Right ventricle myocardium inferior (tissue), 1 donor: ENCODE measurements at regions of chr2 and their contacts with region 1.

Region 1: DNA sequence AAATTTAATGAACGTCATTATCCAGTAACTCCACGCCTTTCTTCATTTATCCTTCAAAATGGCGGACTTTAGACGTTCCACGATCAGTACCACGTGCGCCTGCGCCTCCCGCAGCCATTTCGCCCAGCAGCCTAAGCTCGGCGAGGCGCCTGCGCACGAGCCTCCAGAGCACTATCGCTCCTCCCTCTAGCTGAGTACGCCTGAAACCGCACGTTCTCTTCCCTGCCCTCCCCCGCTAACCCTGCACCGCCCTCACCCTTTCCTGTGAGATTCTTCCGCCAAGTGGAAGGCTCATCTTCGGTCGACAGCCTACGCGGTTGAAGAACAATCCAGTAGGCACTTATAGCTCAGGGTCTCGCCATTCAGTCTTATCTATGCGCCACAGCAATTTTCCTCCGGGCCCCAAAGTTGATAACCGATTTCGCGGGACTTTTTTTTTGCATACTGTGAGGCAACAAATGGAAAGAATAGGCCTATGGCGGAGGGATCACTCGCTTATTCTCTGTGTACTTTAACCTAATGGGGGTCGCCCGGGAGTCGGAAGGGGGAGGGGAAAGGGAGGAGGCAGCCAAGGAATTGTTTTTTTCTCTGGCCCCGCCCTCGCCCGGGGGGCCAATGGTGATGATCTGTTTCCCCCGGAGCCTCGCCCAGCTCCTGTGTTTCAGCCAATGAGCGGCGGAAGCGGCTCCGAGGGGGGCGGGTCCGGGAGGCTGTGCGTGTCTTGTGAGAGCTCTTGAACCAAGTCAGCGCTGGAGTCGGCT is at the start of gene KDM3A:
- DNase-seq: peak; percentile 100
- ATAC-seq: peak; percentile 95
- total RNA-seq, gene KDM3A: 29.5 TPM

Region 2: GRCh38 chr2:86221066-86221684 is 219.6 kb before region 1 on chr2:
- intact Hi-C with region 1: loop called (anchors 5 kb)
- DNase-seq: no peak
- ATAC-seq: no peak

Region 3: DNA sequence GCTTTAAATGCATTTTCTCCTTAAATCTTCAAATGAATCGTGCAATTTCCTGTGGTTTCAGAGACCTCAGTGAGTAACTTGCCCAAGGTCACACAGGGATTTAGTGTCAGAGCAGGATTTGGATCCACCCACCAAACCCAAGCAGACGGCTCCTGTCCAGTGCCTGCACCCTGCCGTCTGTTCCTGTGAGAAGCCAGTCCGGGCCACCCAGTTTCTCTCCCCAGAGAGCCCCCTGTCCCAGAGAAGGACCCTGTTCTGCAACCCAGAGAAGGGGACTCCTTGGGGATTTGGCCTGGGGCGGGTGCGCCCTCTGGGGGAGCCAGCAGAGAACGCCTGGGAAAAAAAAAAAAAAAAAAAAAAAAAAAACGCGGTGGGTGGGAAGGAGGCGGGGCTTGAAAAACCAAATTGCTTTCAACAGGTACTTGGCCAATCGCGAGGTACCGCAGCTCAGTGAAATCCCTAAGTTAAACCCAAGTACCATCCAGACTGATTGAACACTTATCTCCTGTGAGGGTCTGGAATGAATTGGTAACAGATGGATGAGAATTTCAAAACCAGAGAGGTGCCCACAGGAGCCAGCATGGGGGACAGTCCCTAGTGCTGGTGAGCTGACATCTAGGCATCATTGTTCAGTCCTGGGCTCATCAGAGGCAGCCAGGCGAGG is 72.5 kb before region 1 on chr2:
- intact Hi-C with region 1: loop called (anchors 2 kb)
- DNase-seq: no peak
- ATAC-seq: peak; percentile 52

Region 4: GRCh38 chr2:86487062-86487461 is 46.3 kb after region 1 on chr2:
- intact Hi-C with region 1: loop called (anchors 5 kb)
- DNase-seq: no peak
- ATAC-seq: no peak

Region 5: GRCh38 chr2:86562922-86563649 is 122.3 kb after region 1 on chr2 and contains the start of gene CHMP3:
- intact Hi-C with region 1: loop called (anchors 5 kb)
- DNase-seq: peak; percentile 98
- ATAC-seq: peak; percentile 99
- total RNA-seq, gene CHMP3: 171 TPM

Region 6: DNA sequence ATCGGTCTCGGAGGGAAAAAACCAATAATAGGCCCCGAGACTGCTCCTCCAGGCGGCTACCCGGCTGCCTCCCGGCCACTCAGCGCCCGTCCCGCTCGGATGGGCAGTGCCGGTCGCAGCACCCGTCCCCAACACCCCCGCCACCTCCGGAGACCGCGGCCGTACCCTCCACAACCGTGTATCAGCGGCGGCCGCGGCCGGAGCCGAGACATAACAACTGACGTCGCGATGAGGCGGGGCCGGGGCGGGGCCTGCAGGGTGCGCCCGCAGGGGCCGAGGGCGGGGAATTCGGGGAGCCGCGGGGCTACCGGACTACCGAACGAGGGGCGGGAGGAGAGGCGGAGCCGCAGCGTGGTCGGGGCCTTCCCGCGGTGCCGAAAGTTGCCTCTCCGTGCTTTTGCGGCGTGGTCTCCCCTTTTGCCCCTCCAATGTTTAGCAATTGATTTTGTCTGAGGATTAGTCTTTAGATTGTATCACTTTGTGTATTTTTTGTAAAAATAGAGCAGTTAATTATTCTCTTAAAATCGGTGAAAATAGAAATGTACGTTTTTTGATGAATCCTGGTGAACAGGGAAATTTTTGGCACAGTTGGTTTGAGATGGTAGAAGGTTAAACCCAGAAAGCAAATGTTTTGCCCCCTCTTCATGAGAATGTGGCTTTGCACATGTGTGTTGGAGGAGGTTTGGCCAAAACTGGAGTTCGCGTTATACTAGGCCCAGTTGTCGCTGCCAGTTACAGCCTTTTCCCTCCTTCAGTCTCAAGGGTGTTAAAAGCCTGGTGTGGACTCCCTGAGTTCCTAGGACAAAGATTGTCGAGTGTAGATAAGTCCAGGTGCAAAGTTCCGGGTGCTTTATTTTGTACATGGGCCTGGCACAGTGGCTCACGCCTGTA is 183.1 kb after region 1 on chr2 and contains the start of gene RNF103:
- intact Hi-C with region 1: loop called (anchors 5 kb)
- DNase-seq: peak; percentile 99
- ATAC-seq: peak; percentile 97
- total RNA-seq, gene RNF103: 49.6 TPM